ENCODE measurements at regions of chr9 and their contacts with region 1.

Region 1: GRCh38 chr9:86413966-86414880 is 60.0 kb upstream of the TUT7 start:
- DNase-seq: no peak
- H3K4me3 Mint-ChIP-seq: no peak overlapping the region
- H3K27ac Mint-ChIP-seq: no peak overlapping the region
- H3K4me1 Mint-ChIP-seq: no peaks in the 10 kb centered on the region
- H3K27me3 Mint-ChIP-seq: peaks cover 4% of the 10 kb centered on the region

Region 2: GRCh38 chr9:86202338-86202882 is 211.8 kb before region 1 on chr9:
- CTCF ChIA-PET with region 1: interaction called, 6 read pairs
- POLR2A ChIA-PET with region 1: no interaction called
- intact Hi-C with region 1: loop called (anchors 10 kb)
- DNase-seq: peak; percentile 35
- H3K4me3 Mint-ChIP-seq: no peak overlapping the region
- H3K27ac Mint-ChIP-seq: no peak overlapping the region
- H3K4me1 Mint-ChIP-seq: peaks cover 4% of the 10 kb centered on the region
- H3K27me3 Mint-ChIP-seq: peaks cover 1% of the 10 kb centered on the region

Region 3: GRCh38 chr9:86354011-86354817 is 60.0 kb before region 1 on chr9 and contains the start of gene TUT7:
- CTCF ChIA-PET with region 1: no interaction called
- POLR2A ChIA-PET with region 1: no interaction called
- intact Hi-C with region 1: no loop called
- DNase-seq: peak; percentile 97
- H3K4me3 Mint-ChIP-seq: peak within 1 kb of the TSS; percentile 98
- H3K27ac Mint-ChIP-seq: peak within 1 kb of the TSS; percentile 100
- H3K4me1 Mint-ChIP-seq: peaks cover 34% of the 10 kb centered on the region
- H3K27me3 Mint-ChIP-seq: no peaks in the 10 kb centered on the region
- total RNA-seq, gene TUT7: 50.7 to 56.8 TPM

Region 4: GRCh38 chr9:86387399-86387798 is 26.8 kb before region 1 on chr9:
- CTCF ChIA-PET with region 1: interaction called, 10 read pairs
- POLR2A ChIA-PET with region 1: no interaction called
- intact Hi-C with region 1: no loop called
- DNase-seq: no peak
- H3K4me3 Mint-ChIP-seq: no peak overlapping the region
- H3K27ac Mint-ChIP-seq: no peak overlapping the region
- H3K4me1 Mint-ChIP-seq: no peaks in the 10 kb centered on the region
- H3K27me3 Mint-ChIP-seq: peaks cover 36% of the 10 kb centered on the region